B cell (primary cell): ENCODE measurements at regions of chr10 and their contacts with region 1.

Region 1: DNA sequence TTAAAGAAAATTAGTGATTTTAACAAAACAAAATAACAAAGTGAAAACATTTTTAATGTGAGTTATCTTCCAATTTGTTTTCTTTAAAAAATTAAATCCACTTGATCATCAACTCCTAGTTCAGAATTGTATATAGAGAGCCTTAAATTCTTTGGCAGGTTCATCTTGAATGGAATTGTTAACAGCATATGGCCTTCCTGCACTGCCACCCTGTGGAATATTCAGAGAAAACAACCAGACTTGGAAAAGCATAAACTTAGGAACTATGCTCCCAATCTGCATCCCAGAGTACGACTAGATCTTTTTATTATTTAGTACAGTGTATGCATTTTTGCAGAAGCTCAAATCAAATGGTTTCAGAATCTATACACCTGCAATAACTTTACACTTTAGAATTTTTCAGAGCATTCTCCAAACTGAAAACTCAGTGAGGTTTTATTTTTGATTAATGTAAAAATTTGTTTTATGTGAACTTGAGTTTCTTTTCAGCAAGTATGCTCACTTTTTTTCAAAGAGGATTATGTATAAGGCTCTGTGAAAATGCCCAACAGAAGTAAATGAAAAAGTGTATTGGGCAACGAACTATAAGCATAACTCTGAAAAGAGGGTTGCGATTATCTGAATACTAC is 44.9 kb upstream of the ANK3 start:
- DNase-seq: peak; percentile 61
- ATAC-seq: peak; percentile 56
- H3K4me3 ChIP-seq: no peak overlapping the region
- H3K4me3 Mint-ChIP-seq: no peak overlapping the region
- H3K27ac ChIP-seq: no peak overlapping the region
- H3K27ac Mint-ChIP-seq: no peak overlapping the region
- H3K4me1 ChIP-seq: no peaks in the 10 kb centered on the region
- H3K4me1 Mint-ChIP-seq: peaks cover 7% of the 10 kb centered on the region
- H3K27me3 ChIP-seq: no peaks in the 10 kb centered on the region
- H3K27me3 Mint-ChIP-seq: no peaks in the 10 kb centered on the region
- CTCF ChIP-seq: peak; percentile 77

Region 2: GRCh38 chr10:60114765-60115586 is 319.6 kb before region 1 on chr10:
- CTCF ChIA-PET with region 1: interaction called, 27 read pairs
- POLR2A ChIA-PET with region 1: no interaction called
- intact Hi-C with region 1: loop called (anchors 1 kb)
- DNase-seq: peak; percentile 61
- ATAC-seq: peak; percentile 53
- H3K4me3 ChIP-seq: no peak overlapping the region
- H3K4me3 Mint-ChIP-seq: no peak overlapping the region
- H3K27ac ChIP-seq: no peak overlapping the region
- H3K27ac Mint-ChIP-seq: no peak overlapping the region
- H3K4me1 ChIP-seq: peaks cover 4 to 6% of the 10 kb centered on the region in 2 donors
- H3K4me1 Mint-ChIP-seq: no peaks in the 10 kb centered on the region
- H3K27me3 ChIP-seq: no peaks in the 10 kb centered on the region
- H3K27me3 Mint-ChIP-seq: no peaks in the 10 kb centered on the region
- CTCF ChIP-seq: peak; percentile 68

Region 3: DNA sequence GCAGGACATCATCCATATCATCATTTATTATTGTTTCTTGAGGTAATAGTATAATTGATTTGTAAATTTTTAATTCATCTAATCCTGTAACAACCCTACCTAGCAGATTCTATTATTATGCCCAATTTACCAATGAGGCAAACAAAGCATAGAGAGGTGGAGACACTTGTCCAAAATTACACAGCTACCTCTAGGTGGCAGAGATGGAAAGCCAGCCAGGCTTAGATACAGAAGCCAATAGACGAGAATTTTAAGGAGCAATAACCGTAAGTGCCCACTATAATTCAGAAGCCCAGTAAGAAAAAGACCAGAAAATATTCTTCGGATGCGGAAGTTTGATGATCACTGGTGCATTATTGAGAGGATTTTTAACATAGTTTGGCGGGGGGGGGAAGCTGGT is 98.8 kb before region 1 on chr10:
- CTCF ChIA-PET with region 1: interaction called, 51 read pairs
- POLR2A ChIA-PET with region 1: no interaction called
- intact Hi-C with region 1: loop called (anchors 1 kb)
- DNase-seq: peak; percentile 13
- ATAC-seq: peak; percentile 41
- H3K4me3 ChIP-seq: no peak overlapping the region
- H3K4me3 Mint-ChIP-seq: no peak overlapping the region
- H3K27ac ChIP-seq: no peak overlapping the region
- H3K27ac Mint-ChIP-seq: no peak overlapping the region
- H3K4me1 ChIP-seq: no peaks in the 10 kb centered on the region
- H3K4me1 Mint-ChIP-seq: peaks cover 2% of the 10 kb centered on the region
- H3K27me3 ChIP-seq: no peaks in the 10 kb centered on the region
- H3K27me3 Mint-ChIP-seq: no peaks in the 10 kb centered on the region
- CTCF ChIP-seq: no peak